ENCODE measurements at regions of chr14 and their contacts with region 1.

Region 1: GRCh38 chr14:39025810-39026627 is 77.0 kb downstream of the SEC23A start:
- DNase-seq: no peak
- ATAC-seq: no peak
- H3K4me3 ChIP-seq: no peak overlapping the region
- H3K27ac ChIP-seq: no peak overlapping the region
- H3K4me1 ChIP-seq: no peaks in the 10 kb centered on the region
- H3K27me3 ChIP-seq: no peaks in the 10 kb centered on the region
- CTCF ChIP-seq: no peak
- POLR2A ChIP-seq: no peak

Region 2: GRCh38 chr14:38710881-38711280 is 315.1 kb before region 1 on chr14:
- intact Hi-C with region 1: loop called in 1 of 10 experiments (anchors 5 kb)
- DNase-seq: no peak
- ATAC-seq: no peak
- H3K4me3 ChIP-seq: no peak overlapping the region
- H3K27ac ChIP-seq: no peak overlapping the region
- H3K4me1 ChIP-seq: no peaks in the 10 kb centered on the region
- H3K27me3 ChIP-seq: no peaks in the 10 kb centered on the region
- CTCF ChIP-seq: no peak
- POLR2A ChIP-seq: no peak